Right cardiac atrium (tissue), 5 donors: ENCODE measurements at regions of chr9 and their contacts with region 1.

Region 1: DNA sequence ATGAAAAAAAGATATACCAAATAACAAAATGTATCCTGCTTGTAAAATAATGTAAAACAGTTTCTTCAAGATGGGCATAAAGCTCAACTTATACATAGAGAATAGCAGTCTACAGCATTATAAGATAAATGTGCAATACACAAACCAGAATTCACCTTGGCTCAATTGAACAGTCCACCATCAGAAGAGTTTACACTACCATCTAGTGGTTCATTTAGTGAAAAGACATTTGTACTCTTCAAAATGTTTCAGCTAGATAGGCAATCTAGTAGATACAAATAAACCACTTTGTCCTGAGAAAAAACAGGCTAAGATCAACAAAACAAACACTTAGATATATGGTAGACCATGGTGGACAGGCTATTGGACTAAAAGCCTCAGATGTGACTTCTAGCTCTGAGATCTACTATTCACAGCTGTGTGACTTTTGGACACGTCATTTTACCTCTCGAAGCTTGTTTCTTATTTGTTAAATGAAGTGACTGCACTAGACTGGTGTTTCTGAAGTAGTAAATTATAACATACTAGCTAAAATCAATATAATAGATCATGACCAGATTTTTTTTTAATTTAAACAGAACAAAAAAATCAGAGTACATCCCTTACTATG is 22.1 kb upstream of the TPD52L3 start:
- DNase-seq: no peak
- ATAC-seq: peak in 1 of 2 donors; percentile 66
- H3K4me3 ChIP-seq: no peak overlapping the region
- H3K27ac ChIP-seq: no peak overlapping the region
- H3K4me1 ChIP-seq: no peaks in the 10 kb centered on the region
- H3K27me3 ChIP-seq: no peaks in the 10 kb centered on the region

Region 2: GRCh38 chr9:5886114-5886939 is 419.7 kb before region 1 on chr9:
- intact Hi-C with region 1: loop called in 1 of 4 experiments (anchors 10 kb)
- DNase-seq: peak; percentile 68 to 87 (median 86)
- ATAC-seq: peak; percentile 86 to 90
- H3K4me3 ChIP-seq: no peak overlapping the region
- H3K27ac ChIP-seq: no peak overlapping the region
- H3K4me1 ChIP-seq: no peaks in the 10 kb centered on the region
- H3K27me3 ChIP-seq: no peaks in the 10 kb centered on the region

Region 3: DNA sequence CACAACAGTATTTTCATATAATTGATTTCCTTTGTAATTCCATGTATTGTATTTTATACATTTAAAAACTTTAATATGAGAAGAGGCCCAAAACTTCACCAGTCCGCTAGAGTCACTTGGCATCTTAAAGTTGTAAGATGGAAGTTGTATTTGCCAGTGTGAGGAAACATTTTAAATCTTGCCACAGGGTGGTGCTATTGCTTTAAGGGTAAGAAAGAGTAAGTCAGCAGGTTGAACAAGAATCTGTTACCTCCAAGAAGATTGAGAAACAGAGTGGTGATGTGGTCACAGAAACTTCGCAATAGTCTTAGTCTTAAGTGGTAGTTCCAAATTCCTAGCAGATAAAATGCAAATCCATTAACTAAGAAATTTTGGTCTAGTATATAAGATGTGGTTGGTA is 250.8 kb before region 1 on chr9:
- intact Hi-C with region 1: loop called (anchors 5 kb)
- DNase-seq: no peak
- ATAC-seq: peak; percentile 59 to 74
- H3K4me3 ChIP-seq: no peak overlapping the region
- H3K27ac ChIP-seq: no peak overlapping the region
- H3K4me1 ChIP-seq: no peaks in the 10 kb centered on the region
- H3K27me3 ChIP-seq: no peaks in the 10 kb centered on the region

Region 4: GRCh38 chr9:6197330-6197729 is 108.7 kb before region 1 on chr9:
- intact Hi-C with region 1: loop called (anchors 1 to 5 kb)
- DNase-seq: peak in 1 of 3 donors; percentile 40
- ATAC-seq: peak; percentile 74 to 90
- H3K4me3 ChIP-seq: no peak overlapping the region
- H3K27ac ChIP-seq: no peak overlapping the region
- H3K4me1 ChIP-seq: no peaks in the 10 kb centered on the region
- H3K27me3 ChIP-seq: no peaks in the 10 kb centered on the region